ENCODE measurements at regions of chrX and their contacts with region 1.

Region 1: GRCh38 chrX:95505721-95506120 is 1178.9 kb upstream of the DIAPH2 start:
- DNase-seq: peak; percentile 17
- H3K4me3 Mint-ChIP-seq: no peak overlapping the region
- H3K27ac Mint-ChIP-seq: no peak overlapping the region
- H3K4me1 Mint-ChIP-seq: no peaks in the 10 kb centered on the region
- H3K27me3 Mint-ChIP-seq: no peaks in the 10 kb centered on the region
- CTCF ChIP-seq: peak; percentile 10

Region 2: GRCh38 chrX:95629737-95630136 is 124.0 kb after region 1 on chrX:
- CTCF ChIA-PET with region 1: no interaction called
- POLR2A ChIA-PET with region 1: no interaction called
- intact Hi-C with region 1: no loop called
- DNase-seq: peak; percentile 9
- H3K4me3 Mint-ChIP-seq: no peak overlapping the region
- H3K27ac Mint-ChIP-seq: no peak overlapping the region
- H3K4me1 Mint-ChIP-seq: no peaks in the 10 kb centered on the region
- H3K27me3 Mint-ChIP-seq: no peaks in the 10 kb centered on the region
- CTCF ChIP-seq: no peak

Region 3: GRCh38 chrX:95764972-95765451 is 259.3 kb after region 1 on chrX:
- CTCF ChIA-PET with region 1: interaction called, 3 read pairs
- POLR2A ChIA-PET with region 1: no interaction called
- intact Hi-C with region 1: loop called (anchors 5 kb)
- DNase-seq: peak; percentile 67
- H3K4me3 Mint-ChIP-seq: no peak overlapping the region
- H3K27ac Mint-ChIP-seq: no peak overlapping the region
- H3K4me1 Mint-ChIP-seq: no peaks in the 10 kb centered on the region
- H3K27me3 Mint-ChIP-seq: peaks cover 6% of the 10 kb centered on the region
- CTCF ChIP-seq: peak; percentile 48